CD4-positive, alpha-beta memory T cell (primary cell): ENCODE measurements at regions of chr13 and their contacts with region 1.

Region 1: GRCh38 chr13:46553886-46554858 is 1.2 kb downstream of the LRCH1 start:
- DNase-seq: peak; percentile 70 to 85 (median 75)
- H3K4me3 ChIP-seq: peak overlapping the region; percentile 67 to 87
- H3K4me3 Mint-ChIP-seq: peak overlapping the region; percentile 94 to 98 (median 96)
- H3K27ac ChIP-seq: peak overlapping the region; percentile 79
- H3K27ac Mint-ChIP-seq: peak overlapping the region; percentile 92 to 97 (median 94)
- H3K4me1 ChIP-seq: peaks cover 38% of the 10 kb centered on the region
- H3K4me1 Mint-ChIP-seq: peaks cover 38 to 63% (median 45%) of the 10 kb centered on the region in 4 donors
- H3K27me3 ChIP-seq: no peaks in the 10 kb centered on the region
- H3K27me3 Mint-ChIP-seq: peaks cover under 1 to 1% of the 10 kb centered on the region in 2 donors

Region 2: GRCh38 chr13:46492946-46493345 is 61.2 kb before region 1 on chr13:
- CTCF ChIA-PET with region 1: no interaction called
- POLR2A ChIA-PET with region 1: no interaction called
- intact Hi-C with region 1: no loop called
- DNase-seq: peak in 4 of 5 donors; percentile 14 to 26 (median 19)
- H3K4me3 ChIP-seq: no peak overlapping the region
- H3K4me3 Mint-ChIP-seq: no peak overlapping the region
- H3K27ac ChIP-seq: no peak overlapping the region
- H3K27ac Mint-ChIP-seq: no peak overlapping the region
- H3K4me1 ChIP-seq: no peaks in the 10 kb centered on the region
- H3K4me1 Mint-ChIP-seq: no peaks in the 10 kb centered on the region
- H3K27me3 ChIP-seq: no peaks in the 10 kb centered on the region
- H3K27me3 Mint-ChIP-seq: peaks cover 6 to 8% of the 10 kb centered on the region in 2 donors

Region 3: DNA sequence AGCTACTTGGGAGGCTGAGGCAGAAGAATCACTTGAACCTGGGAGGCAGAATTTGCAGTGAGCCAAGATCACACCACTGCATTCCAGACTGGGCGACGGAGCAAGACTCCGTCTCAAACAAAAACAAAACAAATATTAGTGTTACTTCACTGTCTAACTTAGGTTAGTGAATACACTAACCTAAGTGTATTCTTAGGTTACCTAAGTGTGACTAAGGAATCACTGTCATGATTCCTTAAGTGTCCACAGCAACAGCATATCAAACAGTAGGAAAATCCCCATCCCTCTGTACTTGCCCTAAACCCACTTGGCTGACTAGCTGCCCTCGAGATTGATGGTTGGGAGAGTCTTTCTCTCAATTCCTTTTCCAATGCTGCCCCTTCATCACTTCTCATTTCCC is 13.0 kb before region 1 on chr13:
- CTCF ChIA-PET with region 1: interaction called, 16 read pairs
- POLR2A ChIA-PET with region 1: no interaction called
- intact Hi-C with region 1: no loop called
- DNase-seq: no peak
- H3K4me3 ChIP-seq: no peak overlapping the region
- H3K4me3 Mint-ChIP-seq: no peak overlapping the region
- H3K27ac ChIP-seq: no peak overlapping the region
- H3K27ac Mint-ChIP-seq: no peak overlapping the region
- H3K4me1 ChIP-seq: no peaks in the 10 kb centered on the region
- H3K4me1 Mint-ChIP-seq: no peaks in the 10 kb centered on the region
- H3K27me3 ChIP-seq: no peaks in the 10 kb centered on the region
- H3K27me3 Mint-ChIP-seq: peaks cover 4% of the 10 kb centered on the region in 2 donors

Region 4: GRCh38 chr13:46595136-46595886 is 41.1 kb after region 1 on chr13:
- CTCF ChIA-PET with region 1: interaction called, 15 read pairs
- POLR2A ChIA-PET with region 1: no interaction called
- intact Hi-C with region 1: loop called (anchors 5 kb)
- DNase-seq: no peak
- H3K4me3 ChIP-seq: no peak overlapping the region
- H3K4me3 Mint-ChIP-seq: peak overlapping the region in 1 of 8 donors; percentile 13
- H3K27ac ChIP-seq: no peak overlapping the region
- H3K27ac Mint-ChIP-seq: peak overlapping the region in 3 of 7 donors; percentile 5 to 37 (median 32)
- H3K4me1 ChIP-seq: peaks cover 56% of the 10 kb centered on the region
- H3K4me1 Mint-ChIP-seq: peaks cover 40 to 88% (median 67%) of the 10 kb centered on the region in 4 donors
- H3K27me3 ChIP-seq: no peaks in the 10 kb centered on the region
- H3K27me3 Mint-ChIP-seq: no peaks in the 10 kb centered on the region

Region 5: GRCh38 chr13:46668302-46668720 is 114.1 kb after region 1 on chr13:
- CTCF ChIA-PET with region 1: interaction called, 11 read pairs
- POLR2A ChIA-PET with region 1: no interaction called
- intact Hi-C with region 1: loop called (anchors 5 kb)
- DNase-seq: peak in 1 of 5 donors; percentile 4
- H3K4me3 ChIP-seq: peak overlapping the region; percentile 43 to 67
- H3K4me3 Mint-ChIP-seq: peak overlapping the region; percentile 67 to 86 (median 83)
- H3K27ac ChIP-seq: peak overlapping the region; percentile 51
- H3K27ac Mint-ChIP-seq: peak overlapping the region; percentile 47 to 90 (median 82)
- H3K4me1 ChIP-seq: peaks cover 39% of the 10 kb centered on the region
- H3K4me1 Mint-ChIP-seq: peaks cover 36 to 57% (median 49%) of the 10 kb centered on the region in 4 donors
- H3K27me3 ChIP-seq: no peaks in the 10 kb centered on the region
- H3K27me3 Mint-ChIP-seq: no peaks in the 10 kb centered on the region

Region 6: DNA sequence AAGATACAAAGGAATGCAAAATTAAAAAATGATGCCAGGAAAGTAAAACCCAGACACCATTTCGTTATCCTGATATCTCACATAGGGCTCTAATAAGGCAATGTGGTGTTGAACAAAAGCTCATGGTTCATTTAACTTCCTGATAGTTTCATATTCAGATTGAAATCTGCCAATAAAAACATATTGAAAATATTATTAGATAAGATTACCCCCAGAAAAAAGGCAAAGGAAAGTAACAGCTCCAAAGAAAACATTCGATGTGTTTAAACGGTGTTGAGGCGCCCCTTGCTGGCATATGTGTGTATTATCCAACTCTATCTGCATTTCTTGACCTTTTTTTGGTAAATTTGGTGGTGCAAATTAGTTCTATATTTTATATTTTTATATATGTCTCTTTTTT is 166.9 kb after region 1 on chr13:
- CTCF ChIA-PET with region 1: interaction called, 98 read pairs
- POLR2A ChIA-PET with region 1: interaction called, 3 read pairs
- intact Hi-C with region 1: loop called (anchors 1 kb)
- DNase-seq: peak in 4 of 5 donors; percentile 25 to 42 (median 37)
- H3K4me3 ChIP-seq: no peak overlapping the region
- H3K4me3 Mint-ChIP-seq: no peak overlapping the region
- H3K27ac ChIP-seq: no peak overlapping the region
- H3K27ac Mint-ChIP-seq: no peak overlapping the region
- H3K4me1 ChIP-seq: no peaks in the 10 kb centered on the region
- H3K4me1 Mint-ChIP-seq: no peaks in the 10 kb centered on the region
- H3K27me3 ChIP-seq: no peaks in the 10 kb centered on the region
- H3K27me3 Mint-ChIP-seq: no peaks in the 10 kb centered on the region

Region 7: GRCh38 chr13:46796515-46797474 is 242.6 kb after region 1 on chr13 and contains the start of gene ESD:
- CTCF ChIA-PET with region 1: interaction called, 4 read pairs
- POLR2A ChIA-PET with region 1: interaction called, 3 read pairs
- intact Hi-C with region 1: loop called (anchors 1 kb)
- DNase-seq: peak; percentile 80 to 91 (median 85)
- H3K4me3 ChIP-seq: peak within 1 kb of the TSS; percentile 84 to 89
- H3K4me3 Mint-ChIP-seq: peak within 1 kb of the TSS; percentile 90 to 99 (median 98)
- H3K27ac ChIP-seq: peak within 1 kb of the TSS; percentile 72
- H3K27ac Mint-ChIP-seq: peak within 1 kb of the TSS; percentile 93 to 99 (median 99)
- H3K4me1 ChIP-seq: peaks cover 44% of the 10 kb centered on the region
- H3K4me1 Mint-ChIP-seq: peaks cover 21 to 45% (median 36%) of the 10 kb centered on the region in 4 donors
- H3K27me3 ChIP-seq: no peaks in the 10 kb centered on the region
- H3K27me3 Mint-ChIP-seq: no peaks in the 10 kb centered on the region
- total RNA-seq, gene ESD: 57.5 to 61.2 TPM